Thyroid gland (tissue), 4 donors: ENCODE measurements at regions of chr22 and their contacts with region 1.

Region 1: DNA sequence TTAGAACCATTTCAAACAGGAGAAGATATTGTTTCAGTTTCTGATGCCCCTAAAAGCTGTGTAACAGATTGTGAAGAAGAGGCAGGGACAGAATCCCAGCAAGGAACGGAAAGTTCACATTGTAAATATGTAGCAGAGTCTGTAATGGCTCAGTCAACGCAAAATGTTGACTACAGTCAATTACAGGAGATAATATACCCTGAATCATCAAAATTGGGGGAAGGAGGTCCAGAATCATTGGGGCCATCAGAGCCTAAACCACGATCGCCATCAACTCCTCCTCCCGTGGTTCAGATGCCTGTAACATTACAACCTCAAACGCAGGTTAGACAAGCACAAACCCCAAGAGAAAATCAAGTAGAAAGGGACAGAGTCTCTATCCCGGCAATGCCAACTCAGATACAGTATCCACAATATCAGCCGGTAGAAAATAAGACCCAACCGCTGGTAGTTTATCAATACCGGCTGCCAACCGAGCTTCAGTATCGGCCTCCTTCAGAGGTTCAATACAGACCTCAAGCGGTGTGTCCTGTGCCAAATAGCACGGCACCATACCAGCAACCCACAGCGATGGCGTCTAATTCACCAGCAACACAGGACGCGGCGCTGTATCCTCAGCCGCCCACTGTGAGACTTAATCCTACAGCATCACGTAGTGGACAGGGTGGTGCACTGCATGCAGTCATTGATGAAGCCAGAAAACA is 40.8 kb downstream of the IGLL1 start:
- DNase-seq: peak; percentile 85
- H3K4me3 ChIP-seq: no peak overlapping the region
- H3K27ac ChIP-seq: no peak overlapping the region
- H3K4me1 ChIP-seq: peaks cover 0 to 27% of the 10 kb centered on the region in 2 donors
- H3K27me3 ChIP-seq: no peaks in the 10 kb centered on the region
- CTCF ChIP-seq: peak; percentile 79 to 99 (median 93)
- POLR2A ChIP-seq: no peak

Region 2: GRCh38 chr22:23402275-23403151 is 136.8 kb before region 1 on chr22:
- intact Hi-C with region 1: loop called (anchors 5 kb)
- DNase-seq: peak; percentile 83
- H3K4me3 ChIP-seq: no peak overlapping the region
- H3K27ac ChIP-seq: no peak overlapping the region
- H3K4me1 ChIP-seq: peaks cover 0 to 15% of the 10 kb centered on the region in 2 donors
- H3K27me3 ChIP-seq: no peaks in the 10 kb centered on the region
- CTCF ChIP-seq: peak in 4 of 6 experiments; percentile 32 to 68 (median 59)
- POLR2A ChIP-seq: peak in 1 of 2 donors; percentile 24

Region 3: DNA sequence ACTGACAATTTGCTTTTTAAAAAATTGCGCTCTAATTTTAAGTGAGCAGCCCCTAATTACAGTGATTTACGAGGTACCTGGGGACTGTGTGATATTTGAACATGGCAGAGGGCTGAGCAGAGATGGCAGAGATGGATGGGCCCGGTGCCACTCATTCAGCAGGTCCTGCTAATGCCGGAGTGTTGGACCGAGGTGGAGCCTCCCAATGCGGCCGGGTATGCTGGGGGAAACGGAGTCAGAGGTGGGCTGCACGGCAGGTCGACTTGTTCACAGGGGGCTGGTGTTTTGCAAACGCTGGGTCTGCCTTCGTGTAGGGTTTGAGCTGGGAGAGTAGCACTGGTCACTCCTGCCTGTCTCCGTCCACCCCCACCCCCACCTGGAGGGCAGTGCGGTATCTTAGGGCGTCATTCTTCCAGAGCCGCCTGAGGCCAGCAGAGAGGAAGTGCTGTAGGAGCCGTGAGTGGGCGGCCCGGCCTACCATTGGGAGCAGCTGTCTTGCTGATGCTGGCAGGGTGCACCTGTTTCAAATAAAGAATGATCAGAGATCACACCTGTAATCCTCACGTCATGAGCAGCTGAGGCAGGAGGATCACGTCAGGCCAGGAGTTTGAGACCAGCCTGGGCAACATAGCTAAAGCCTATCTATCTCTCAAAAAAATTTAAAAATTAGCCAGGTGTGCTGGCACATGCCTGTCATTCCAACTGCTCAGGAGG is 81.8 kb before region 1 on chr22:
- intact Hi-C with region 1: no loop called
- DNase-seq: no peak
- H3K4me3 ChIP-seq: no peak overlapping the region
- H3K27ac ChIP-seq: no peak overlapping the region
- H3K4me1 ChIP-seq: peaks cover 0 to 13% of the 10 kb centered on the region in 2 donors
- H3K27me3 ChIP-seq: no peaks in the 10 kb centered on the region
- CTCF ChIP-seq: no peak
- POLR2A ChIP-seq: no peak

Region 4: DNA sequence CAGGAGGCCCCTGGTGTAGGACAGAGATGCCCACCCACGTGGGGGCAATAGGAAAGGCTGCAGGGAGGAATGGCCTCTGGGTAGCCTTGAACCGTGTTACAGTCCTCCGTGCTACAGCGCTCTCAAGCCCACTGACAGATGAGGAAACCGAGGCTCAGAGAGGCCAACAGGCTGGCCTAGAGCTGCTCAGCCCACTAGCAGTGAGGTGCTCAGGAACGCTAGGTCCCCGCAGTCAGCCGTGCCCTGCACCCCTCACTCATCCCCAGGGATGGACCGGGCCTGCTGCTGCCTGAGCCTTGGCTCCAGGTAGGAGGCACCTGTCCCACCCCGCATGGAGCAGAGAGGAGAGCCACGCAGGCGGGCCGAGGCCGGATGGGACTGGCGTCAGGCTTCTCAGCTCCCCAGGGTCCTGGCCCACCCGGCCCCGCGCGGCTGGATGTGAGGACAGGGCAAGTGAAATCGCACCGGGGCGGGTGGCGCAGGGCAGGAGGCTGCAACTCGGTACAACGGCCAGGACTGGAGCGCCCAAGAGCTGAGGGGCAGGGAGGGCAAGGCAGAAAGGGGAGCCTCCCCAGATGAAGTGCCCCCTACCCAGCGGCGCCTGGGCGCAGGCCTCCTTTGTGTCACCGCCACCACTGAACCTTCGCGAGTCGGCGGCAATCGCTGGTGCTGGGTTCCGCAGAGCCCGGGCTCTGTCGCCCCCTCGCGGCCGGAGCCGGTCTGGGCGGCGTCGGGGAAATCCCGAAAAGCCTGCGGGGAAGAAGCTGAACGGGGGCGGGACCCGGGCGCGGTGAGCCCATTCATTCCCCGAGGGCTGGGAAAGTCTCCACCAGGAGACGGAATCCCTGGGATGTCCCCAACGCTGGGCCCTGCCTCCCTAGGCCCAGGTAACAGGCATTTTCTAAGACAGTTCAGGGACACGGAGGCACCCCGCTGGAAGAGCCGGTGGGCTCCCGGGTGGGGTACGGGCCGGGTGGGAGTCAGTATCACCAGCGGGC is 310.0 kb after region 1 on chr22:
- intact Hi-C with region 1: loop called (anchors 10 kb)
- DNase-seq: peak; percentile 78 to 85
- H3K4me3 ChIP-seq: no peak overlapping the region
- H3K27ac ChIP-seq: no peak overlapping the region
- H3K4me1 ChIP-seq: peaks cover 8 to 24% of the 10 kb centered on the region in 2 donors
- H3K27me3 ChIP-seq: no peaks in the 10 kb centered on the region
- CTCF ChIP-seq: peak; percentile 78 to 97 (median 96)
- POLR2A ChIP-seq: no peak